Activated CD4-positive, alpha-beta T cell treated with anti-CD3 and anti-CD28 coated beads for 36 hours (primary cell): ENCODE measurements at regions of chr15 and their contacts with region 1.

Region 1: GRCh38 chr15:63048115-63048775 is 5.7 kb downstream of the TPM1 start:
- DNase-seq: peak; percentile 91
- ATAC-seq: peak; percentile 86
- H3K4me3 Mint-ChIP-seq: peak overlapping the region; percentile 84
- H3K27ac Mint-ChIP-seq: no peak overlapping the region
- H3K4me1 Mint-ChIP-seq: peaks cover 18% of the 10 kb centered on the region
- H3K27me3 Mint-ChIP-seq: peaks cover 36% of the 10 kb centered on the region

Region 2: DNA sequence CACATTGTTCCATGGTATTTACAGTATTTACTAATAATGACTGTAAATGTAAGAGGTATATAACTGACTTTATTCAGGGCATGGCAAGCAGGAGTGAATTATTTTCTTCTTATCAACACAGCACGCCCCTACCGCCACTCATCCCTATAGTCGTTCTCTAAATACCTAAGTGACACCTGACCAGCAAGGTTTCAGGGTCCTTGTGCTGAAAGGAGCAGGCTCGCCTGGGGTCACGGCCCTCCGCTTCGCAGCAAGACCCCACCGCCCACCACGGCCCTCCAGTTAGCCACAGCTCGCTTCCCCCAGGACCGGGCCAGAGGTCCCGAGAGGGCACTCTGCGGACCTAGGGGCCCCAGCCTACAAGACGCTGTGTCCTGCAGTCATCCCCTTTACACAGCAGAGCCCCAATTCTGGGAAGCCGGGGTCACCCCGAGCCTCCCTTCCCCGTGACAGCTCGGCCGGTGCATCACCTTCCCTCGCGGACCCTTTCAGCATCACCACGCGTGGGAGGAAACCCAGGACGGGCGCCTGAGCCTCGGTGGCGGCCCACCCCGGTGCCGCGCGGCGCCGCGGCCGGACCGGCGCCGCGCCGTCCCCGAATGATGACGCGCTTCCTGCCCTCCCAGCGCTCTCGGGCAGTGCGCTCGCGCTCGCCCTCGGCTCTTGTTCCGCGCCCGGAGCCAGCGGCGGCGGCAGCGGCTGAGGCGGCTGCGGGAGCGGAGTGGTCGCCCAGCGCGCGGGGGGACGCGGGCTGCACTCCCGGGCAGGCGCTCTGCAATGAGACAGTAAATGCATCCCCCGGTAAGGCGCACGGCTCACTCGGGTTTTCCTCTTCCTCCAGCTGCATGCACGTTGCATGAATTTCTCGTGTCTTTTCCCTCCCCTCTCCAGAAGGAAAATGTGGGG is 658.1 kb before region 1 on chr15:
- CTCF ChIA-PET with region 1: no interaction called
- POLR2A ChIA-PET with region 1: no interaction called
- intact Hi-C with region 1: loop called in 1 of 2 experiments (anchors 1 kb)
- DNase-seq: peak; percentile 80
- ATAC-seq: peak; percentile 86
- H3K4me3 Mint-ChIP-seq: peak within 1 kb of the TSS; percentile 88
- H3K27ac Mint-ChIP-seq: peak within 1 kb of the TSS; percentile 84
- H3K4me1 Mint-ChIP-seq: peaks cover 15% of the 10 kb centered on the region
- H3K27me3 Mint-ChIP-seq: peaks cover 17% of the 10 kb centered on the region

Region 3: DNA sequence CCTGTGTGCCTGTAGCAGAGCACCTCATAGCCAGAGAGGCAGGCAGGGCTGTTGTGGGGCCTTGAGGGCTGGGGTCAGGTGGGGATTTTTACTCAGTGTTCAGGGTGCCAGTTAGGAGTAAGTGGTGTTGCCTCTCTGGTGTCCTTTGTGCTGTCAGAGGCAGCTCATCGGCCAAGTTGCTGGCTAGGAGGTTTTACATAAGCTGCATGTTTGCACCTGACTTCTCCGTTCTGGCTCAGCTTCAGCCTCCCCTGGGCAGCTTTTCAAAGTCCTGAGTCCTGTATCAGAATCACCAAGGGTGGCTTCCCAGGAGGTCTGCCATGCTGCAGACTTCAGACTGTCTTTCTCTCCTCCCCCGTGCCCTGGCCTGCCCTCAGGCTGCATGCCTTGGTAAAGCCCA is 248.3 kb before region 1 on chr15:
- CTCF ChIA-PET with region 1: no interaction called
- POLR2A ChIA-PET with region 1: no interaction called
- intact Hi-C with region 1: no loop called
- DNase-seq: no peak
- ATAC-seq: no peak
- H3K4me3 Mint-ChIP-seq: no peak overlapping the region
- H3K27ac Mint-ChIP-seq: no peak overlapping the region
- H3K4me1 Mint-ChIP-seq: no peaks in the 10 kb centered on the region
- H3K27me3 Mint-ChIP-seq: no peaks in the 10 kb centered on the region

Region 4: DNA sequence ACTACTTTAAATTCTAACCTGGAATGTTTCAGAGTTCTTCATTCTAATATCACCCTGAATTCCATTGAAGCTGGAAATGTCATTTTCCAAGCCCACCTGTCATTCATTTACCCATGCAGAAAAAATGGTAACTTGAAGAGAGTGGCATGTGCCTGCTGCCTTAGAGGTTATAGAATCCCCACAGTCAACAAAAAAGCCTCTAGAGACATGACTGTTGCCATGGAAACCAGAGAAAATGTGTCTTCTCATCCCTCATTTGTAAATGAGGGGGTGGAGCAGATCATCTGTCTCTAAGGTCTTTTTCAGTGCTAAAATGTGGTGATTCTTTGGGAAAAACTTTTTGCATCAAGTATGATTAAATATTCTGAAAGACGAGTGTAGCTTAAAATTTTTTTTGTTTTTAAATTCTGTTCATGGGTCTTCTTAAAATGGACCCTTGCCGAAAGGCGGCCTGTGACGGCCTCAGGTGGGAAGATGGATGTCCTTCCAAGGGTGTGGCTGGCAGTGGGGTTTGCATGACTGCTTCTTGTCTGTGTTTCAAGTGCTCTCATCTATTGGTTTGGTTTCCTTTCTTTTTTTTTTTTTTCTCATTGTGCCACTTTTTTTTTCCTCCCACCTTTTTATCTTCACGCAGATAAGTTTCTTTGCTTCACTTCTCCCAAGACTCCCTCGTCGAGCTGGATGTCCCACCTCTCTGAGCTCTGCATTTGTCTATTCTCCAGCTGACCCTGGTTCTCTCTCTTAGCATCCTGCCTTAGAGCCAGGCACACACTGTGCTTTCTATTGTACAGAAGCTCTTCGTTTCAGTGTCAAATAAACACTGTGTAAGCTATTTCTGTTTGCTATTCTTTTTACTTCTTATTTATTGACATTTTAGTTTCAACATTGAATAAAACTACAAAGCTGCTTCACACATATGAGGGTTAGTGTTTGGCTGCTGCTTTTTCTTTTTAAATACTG is 17.3 kb after region 1 on chr15:
- CTCF ChIA-PET with region 1: interaction called, 15 read pairs
- POLR2A ChIA-PET with region 1: no interaction called
- intact Hi-C with region 1: no loop called
- DNase-seq: no peak
- ATAC-seq: no peak
- H3K4me3 Mint-ChIP-seq: no peak overlapping the region
- H3K27ac Mint-ChIP-seq: no peak overlapping the region
- H3K4me1 Mint-ChIP-seq: no peaks in the 10 kb centered on the region
- H3K27me3 Mint-ChIP-seq: no peaks in the 10 kb centered on the region

Region 5: DNA sequence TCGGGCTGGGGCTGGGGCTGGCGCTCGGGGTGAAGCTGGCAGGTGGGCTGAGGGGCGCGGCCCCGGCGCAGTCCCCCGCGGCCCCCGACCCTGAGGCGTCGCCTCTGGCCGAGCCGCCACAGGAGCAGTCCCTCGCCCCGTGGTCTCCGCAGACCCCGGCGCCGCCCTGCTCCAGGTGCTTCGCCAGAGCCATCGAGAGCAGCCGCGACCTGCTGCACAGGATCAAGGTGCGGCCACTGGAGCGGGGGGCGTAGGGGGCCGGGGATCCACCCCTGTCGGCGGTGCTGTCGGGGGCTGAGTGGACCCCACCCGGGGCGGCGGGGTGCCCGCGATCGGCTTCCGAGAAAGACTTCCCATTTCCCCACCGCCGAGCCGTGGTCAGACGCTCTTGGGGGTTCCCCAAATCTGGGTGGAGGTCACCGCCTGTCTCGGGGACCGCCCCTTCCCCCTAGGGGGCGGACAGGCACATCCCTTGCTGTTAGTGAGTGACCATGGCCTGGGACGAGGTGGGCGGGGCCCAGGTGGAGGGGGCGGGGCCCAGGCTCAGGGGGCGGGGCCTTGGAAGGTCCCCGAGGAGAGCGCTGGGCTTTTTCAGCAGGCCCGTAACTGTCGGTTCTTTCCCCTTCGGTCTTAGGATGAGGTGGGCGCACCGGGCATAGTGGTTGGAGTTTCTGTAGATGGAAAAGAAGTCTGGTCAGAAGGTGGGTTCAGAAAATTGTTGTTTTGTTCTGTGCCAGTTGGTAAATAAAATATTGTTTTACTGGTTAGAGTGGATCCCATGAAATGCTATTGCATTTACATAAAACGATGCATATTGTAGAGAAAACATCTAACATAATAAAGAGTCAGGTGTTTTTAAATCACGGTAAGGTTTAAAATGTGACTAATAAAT is 74.0 kb after region 1 on chr15:
- CTCF ChIA-PET with region 1: interaction called, 8 read pairs
- POLR2A ChIA-PET with region 1: no interaction called
- intact Hi-C with region 1: loop called (anchors 1 to 2 kb)
- DNase-seq: peak; percentile 91
- ATAC-seq: peak; percentile 89
- H3K4me3 Mint-ChIP-seq: peak overlapping the region; percentile 92
- H3K27ac Mint-ChIP-seq: peak overlapping the region; percentile 88
- H3K4me1 Mint-ChIP-seq: peaks cover 12% of the 10 kb centered on the region
- H3K27me3 Mint-ChIP-seq: no peaks in the 10 kb centered on the region

Region 6: DNA sequence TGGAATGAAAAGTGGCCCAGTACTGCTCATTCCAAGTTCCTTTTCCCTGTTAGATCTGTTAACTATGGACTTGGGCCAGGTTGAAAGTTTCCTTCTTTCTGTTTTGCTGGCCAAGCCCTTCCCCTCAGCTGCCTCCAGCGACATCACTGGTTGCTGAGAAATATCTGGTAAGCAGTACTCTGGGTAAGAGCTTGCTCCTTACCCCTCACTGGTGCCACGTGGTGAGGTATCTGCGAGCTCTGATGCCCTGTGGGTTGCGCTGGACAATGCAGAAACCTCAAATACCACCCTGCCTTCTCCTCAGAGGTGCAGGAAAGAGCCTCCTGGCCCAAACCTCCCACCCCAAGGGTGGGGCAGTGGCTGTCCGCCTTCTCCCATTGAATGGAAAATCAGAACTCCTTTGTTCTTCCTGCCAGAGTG is 186.2 kb after region 1 on chr15:
- CTCF ChIA-PET with region 1: interaction called, 16 read pairs
- POLR2A ChIA-PET with region 1: no interaction called
- intact Hi-C with region 1: no loop called
- DNase-seq: no peak
- ATAC-seq: no peak
- H3K4me3 Mint-ChIP-seq: no peak overlapping the region
- H3K27ac Mint-ChIP-seq: peak overlapping the region; percentile 67
- H3K4me1 Mint-ChIP-seq: peaks cover 79% of the 10 kb centered on the region
- H3K27me3 Mint-ChIP-seq: no peaks in the 10 kb centered on the region

Region 7: GRCh38 chr15:63288778-63289378 is 240.6 kb after region 1 on chr15:
- CTCF ChIA-PET with region 1: interaction called, 12 read pairs
- POLR2A ChIA-PET with region 1: no interaction called
- intact Hi-C with region 1: loop called in 1 of 2 experiments (anchors 10 kb)
- DNase-seq: no peak
- ATAC-seq: peak; percentile 81
- H3K4me3 Mint-ChIP-seq: no peak overlapping the region
- H3K27ac Mint-ChIP-seq: no peak overlapping the region
- H3K4me1 Mint-ChIP-seq: peaks cover 8% of the 10 kb centered on the region
- H3K27me3 Mint-ChIP-seq: no peaks in the 10 kb centered on the region

Region 8: DNA sequence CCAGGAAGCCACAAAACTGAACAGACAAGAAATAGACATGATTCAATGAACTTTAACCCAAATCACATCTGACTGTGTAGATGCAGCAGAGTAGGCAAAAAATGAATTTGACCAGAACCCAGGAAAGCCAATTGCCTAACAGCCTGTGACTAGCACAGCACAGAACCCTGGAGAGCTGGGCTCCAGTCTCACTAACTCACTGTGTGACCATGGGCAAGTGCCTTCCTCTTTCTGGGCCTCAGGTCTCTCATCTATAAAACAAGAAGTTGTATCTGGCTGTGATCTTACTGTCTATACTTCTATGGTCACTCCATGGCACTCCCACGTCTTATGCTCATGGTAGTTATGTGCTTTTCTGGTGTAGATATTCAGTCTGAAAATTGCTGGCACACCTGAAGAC is 408.0 kb after region 1 on chr15:
- CTCF ChIA-PET with region 1: no interaction called
- POLR2A ChIA-PET with region 1: no interaction called
- intact Hi-C with region 1: no loop called
- DNase-seq: no peak
- ATAC-seq: no peak
- H3K4me3 Mint-ChIP-seq: no peak overlapping the region
- H3K27ac Mint-ChIP-seq: no peak overlapping the region
- H3K4me1 Mint-ChIP-seq: no peaks in the 10 kb centered on the region
- H3K27me3 Mint-ChIP-seq: no peaks in the 10 kb centered on the region

Region 9: GRCh38 chr15:63600616-63601025 is 552.4 kb after region 1 on chr15:
- CTCF ChIA-PET with region 1: interaction called, 4 read pairs
- POLR2A ChIA-PET with region 1: no interaction called
- intact Hi-C with region 1: loop called in 1 of 2 experiments (anchors 2 kb)
- DNase-seq: peak; percentile 95
- ATAC-seq: peak; percentile 74
- H3K4me3 Mint-ChIP-seq: peak overlapping the region; percentile 88
- H3K27ac Mint-ChIP-seq: peak overlapping the region; percentile 96
- H3K4me1 Mint-ChIP-seq: peaks cover 54% of the 10 kb centered on the region
- H3K27me3 Mint-ChIP-seq: no peaks in the 10 kb centered on the region